K562 (cell line): ENCODE measurements at regions of chr5 and their contacts with region 1.

Region 1: DNA sequence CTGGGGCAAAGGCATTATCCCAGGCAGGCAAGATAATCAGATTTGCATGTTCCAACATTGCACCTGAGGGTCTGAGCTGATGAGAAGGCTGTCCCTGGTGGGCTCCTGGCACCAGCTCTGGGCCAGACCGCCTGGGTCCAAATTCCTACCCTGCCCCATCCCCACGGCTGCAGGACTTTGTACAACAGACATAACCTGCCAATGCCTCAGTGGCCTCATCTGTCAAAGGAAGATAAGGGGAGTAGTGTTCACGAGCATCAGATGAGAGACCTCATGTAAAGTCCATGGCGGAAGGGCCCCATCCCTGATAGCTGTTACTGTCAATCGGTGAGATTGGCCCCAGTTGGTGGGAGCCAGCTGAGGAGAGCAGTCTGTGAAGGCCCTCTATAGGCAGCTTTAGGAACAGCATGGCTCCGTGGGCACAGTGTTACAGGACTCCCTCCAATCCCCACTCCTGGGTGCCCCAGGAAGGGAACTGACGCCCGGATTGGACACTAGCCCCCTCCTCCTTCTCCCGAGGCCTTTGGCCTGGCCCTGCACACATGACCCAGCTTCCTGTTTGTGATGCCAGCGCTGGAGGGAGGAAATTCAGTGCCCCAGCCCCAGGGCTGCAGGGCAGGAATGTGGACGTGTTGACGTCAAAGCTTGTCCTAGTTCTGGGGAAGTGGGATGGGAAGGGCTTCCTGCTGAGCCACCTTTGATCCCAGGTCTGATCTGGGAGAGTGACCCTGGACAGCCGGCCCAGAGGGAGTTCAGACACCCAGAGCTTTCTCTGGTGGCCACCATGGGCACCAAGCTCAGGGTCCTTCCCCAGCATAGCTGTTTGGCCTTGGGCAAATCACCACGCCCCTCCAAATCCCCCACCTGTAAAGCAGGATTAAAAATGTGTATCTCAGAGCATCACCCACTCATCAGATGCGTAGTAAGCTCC is 56.2 kb downstream of the DUSP1 start:
- DNase-seq: peak; percentile 72 to 79 (median 74)
- ATAC-seq: peak; percentile 87
- H3K4me3 ChIP-seq: no peak overlapping the region
- H3K27ac ChIP-seq: no peak overlapping the region
- H3K4me1 ChIP-seq: peaks cover 2 to 6% of the 10 kb centered on the region in 2 experiments; a peak in 2 of 5 replicates
- H3K27me3 ChIP-seq: peaks cover 0 to 16% of the 10 kb centered on the region in 2 experiments; a peak in 3 of 5 replicates
- CTCF ChIP-seq: peak; percentile 74 to 91 (median 84)
- EP300 ChIP-seq: no peak
- POLR2A ChIP-seq: no peak
- RAD21 ChIP-seq: peak; percentile 39 to 64

Region 2: DNA sequence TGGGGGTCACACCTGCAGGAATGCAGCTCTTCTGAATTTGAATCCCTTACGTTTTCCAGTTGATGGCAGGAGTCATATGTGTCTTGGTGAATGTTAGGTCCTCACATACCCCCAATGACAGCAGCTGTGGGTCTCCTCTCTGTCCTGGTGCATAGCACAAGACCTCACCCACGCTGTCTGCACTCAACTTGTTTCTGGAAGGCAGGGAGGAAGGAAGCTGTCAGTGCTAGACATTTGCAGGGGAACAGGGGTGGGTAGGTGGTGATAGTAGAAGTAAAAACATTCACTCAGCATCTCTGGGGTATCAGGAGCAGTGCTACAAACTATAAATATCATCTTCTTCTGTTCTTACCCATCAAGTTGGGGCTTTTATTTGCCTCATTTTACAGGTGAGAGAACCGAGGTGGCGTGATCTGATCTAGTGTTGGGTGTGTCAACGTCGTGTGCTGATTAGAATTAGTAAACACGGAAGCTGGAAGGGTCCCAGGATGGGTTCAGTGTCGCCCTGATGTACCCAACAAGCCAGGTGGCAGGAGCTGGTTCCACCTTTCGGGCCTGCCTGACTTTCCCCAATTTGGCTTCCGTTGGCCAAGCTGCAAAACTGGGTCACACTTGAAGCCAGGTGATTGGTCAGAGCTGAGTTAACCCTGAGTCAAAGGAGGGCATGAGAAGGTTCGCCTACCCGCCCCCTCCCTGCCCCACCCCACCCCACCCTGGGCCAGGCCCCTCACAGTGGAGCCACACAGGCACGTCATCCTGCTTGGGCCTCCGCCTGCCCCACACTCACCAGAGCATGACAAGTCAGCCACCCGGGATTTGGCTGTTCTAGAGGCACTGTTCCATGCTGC is 135.1 kb after region 1 on chr5:
- CTCF ChIA-PET with region 1: interaction called, 3 read pairs
- POLR2A ChIA-PET with region 1: no interaction called
- in situ Hi-C with region 1: no loop called
- intact Hi-C with region 1: loop called (anchors 5 kb)
- DNase-seq: no peak
- ATAC-seq: no peak
- H3K4me3 ChIP-seq: no peak overlapping the region
- H3K27ac ChIP-seq: no peak overlapping the region
- H3K4me1 ChIP-seq: peaks cover 0 to 11% of the 10 kb centered on the region in 2 experiments; a peak in 2 of 5 replicates
- H3K27me3 ChIP-seq: no peaks in the 10 kb centered on the region
- CTCF ChIP-seq: no peak
- EP300 ChIP-seq: no peak
- POLR2A ChIP-seq: no peak
- RAD21 ChIP-seq: no peak

Region 3: GRCh38 chr5:172902497-172903200 is 187.9 kb after region 1 on chr5:
- CTCF ChIA-PET with region 1: interaction called, 54 read pairs
- POLR2A ChIA-PET with region 1: interaction called, 4 read pairs
- in situ Hi-C with region 1: loop called (anchors 5 kb)
- intact Hi-C with region 1: loop called (anchors 1 kb)
- DNase-seq: peak; percentile 76 to 86 (median 84)
- ATAC-seq: peak; percentile 81
- H3K4me3 ChIP-seq: no peak overlapping the region
- H3K27ac ChIP-seq: peak overlapping the region; percentile 79; the same call in 2 of the 3 replicates
- H3K4me1 ChIP-seq: peaks cover 26 to 36% of the 10 kb centered on the region in 2 experiments
- H3K27me3 ChIP-seq: no peaks in the 10 kb centered on the region
- CTCF ChIP-seq: peak; percentile 75 to 89 (median 79)
- EP300 ChIP-seq: no peak
- POLR2A ChIP-seq: no peak
- RAD21 ChIP-seq: peak; percentile 77 to 79

Region 4: GRCh38 chr5:172932313-172933017 is 217.7 kb after region 1 on chr5:
- CTCF ChIA-PET with region 1: interaction called, 60 read pairs
- POLR2A ChIA-PET with region 1: interaction called, 5 read pairs
- in situ Hi-C with region 1: loop called (anchors 5 kb)
- intact Hi-C with region 1: loop called (anchors 1 kb)
- DNase-seq: peak; percentile 75 to 83 (median 80)
- ATAC-seq: peak; percentile 98
- H3K4me3 ChIP-seq: no peak overlapping the region
- H3K27ac ChIP-seq: no peak overlapping the region
- H3K4me1 ChIP-seq: peaks cover 0 to 5% of the 10 kb centered on the region in 2 experiments; a peak in 1 of 5 replicates
- H3K27me3 ChIP-seq: no peaks in the 10 kb centered on the region
- CTCF ChIP-seq: peak; percentile 91 to 94 (median 92)
- EP300 ChIP-seq: 0 out of 2 replicates have a peak, but pooled peaks have one; percentile 4
- POLR2A ChIP-seq: no peak
- RAD21 ChIP-seq: peak; percentile 89 to 97

Region 5: GRCh38 chr5:174311531-174312269 is 1596.9 kb after region 1 on chr5:
- CTCF ChIA-PET with region 1: no interaction called
- POLR2A ChIA-PET with region 1: no interaction called
- in situ Hi-C with region 1: loop called (anchors 25 kb)
- intact Hi-C with region 1: no loop called
- DNase-seq: peak; percentile 65 to 83 (median 78)
- ATAC-seq: peak; percentile 98
- H3K4me3 ChIP-seq: no peak overlapping the region
- H3K27ac ChIP-seq: no peak overlapping the region
- H3K4me1 ChIP-seq: peaks cover 0 to 15% of the 10 kb centered on the region in 2 experiments; a peak in 2 of 5 replicates
- H3K27me3 ChIP-seq: peaks cover 15 to 82% of the 10 kb centered on the region in 2 experiments
- CTCF ChIP-seq: peak; percentile 59 to 83 (median 76)
- EP300 ChIP-seq: no peak
- POLR2A ChIP-seq: no peak
- RAD21 ChIP-seq: peak; percentile 84 to 88